Spleen (tissue), 13 donors: ENCODE measurements at regions of chr5 and their contacts with region 1.

Region 1: DNA sequence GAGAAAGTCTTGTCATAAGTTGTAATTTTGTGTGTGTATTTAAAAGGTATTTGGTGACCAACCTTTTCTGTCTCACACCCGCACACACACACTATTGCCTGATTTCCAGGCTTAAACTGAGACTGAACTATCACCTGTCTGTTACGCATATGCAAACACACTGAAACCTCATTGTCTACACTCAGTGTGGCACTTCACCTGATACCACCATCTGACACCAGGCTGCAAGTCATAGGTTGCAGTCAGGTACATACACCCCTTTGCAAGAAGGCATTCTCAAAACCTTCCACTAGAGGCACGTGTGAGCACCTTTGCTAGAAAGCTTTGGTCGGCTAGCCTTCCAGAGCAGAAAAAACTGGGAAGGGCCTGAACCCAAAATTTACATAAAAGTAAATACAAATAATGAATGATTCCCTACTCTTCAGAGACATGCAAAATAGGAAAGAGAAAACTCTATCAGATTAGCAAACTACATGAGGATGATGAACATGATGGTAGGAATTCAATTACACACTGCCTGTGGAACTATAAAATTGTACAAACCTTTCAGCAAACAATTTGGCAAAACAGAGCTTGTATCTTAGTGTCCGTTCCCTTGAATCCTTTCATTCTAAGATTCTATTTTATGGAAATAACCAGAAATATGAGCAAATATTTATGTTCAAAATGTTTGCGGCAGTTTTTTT is 5.9 kb upstream of the FOXD1 start:
- DNase-seq: no peak
- H3K4me3 ChIP-seq: no peak overlapping the region
- H3K27ac ChIP-seq: no peak overlapping the region
- H3K4me1 ChIP-seq: peaks cover 0 to 16% (median 12%) of the 10 kb centered on the region in 6 donors
- H3K27me3 ChIP-seq: peaks cover 18 to 98% (median 70%) of the 10 kb centered on the region in 7 donors
- CTCF ChIP-seq: peak in 10 of 11 experiments; percentile 21 to 77 (median 58)
- POLR2A ChIP-seq: no peak

Region 2: GRCh38 chr5:73088026-73088425 is 366.5 kb before region 1 on chr5:
- intact Hi-C with region 1: loop called (anchors 10 kb)
- DNase-seq: no peak
- H3K4me3 ChIP-seq: no peak overlapping the region
- H3K27ac ChIP-seq: no peak overlapping the region
- H3K4me1 ChIP-seq: no peaks in the 10 kb centered on the region
- H3K27me3 ChIP-seq: no peaks in the 10 kb centered on the region
- CTCF ChIP-seq: no peak
- POLR2A ChIP-seq: no peak

Region 3: DNA sequence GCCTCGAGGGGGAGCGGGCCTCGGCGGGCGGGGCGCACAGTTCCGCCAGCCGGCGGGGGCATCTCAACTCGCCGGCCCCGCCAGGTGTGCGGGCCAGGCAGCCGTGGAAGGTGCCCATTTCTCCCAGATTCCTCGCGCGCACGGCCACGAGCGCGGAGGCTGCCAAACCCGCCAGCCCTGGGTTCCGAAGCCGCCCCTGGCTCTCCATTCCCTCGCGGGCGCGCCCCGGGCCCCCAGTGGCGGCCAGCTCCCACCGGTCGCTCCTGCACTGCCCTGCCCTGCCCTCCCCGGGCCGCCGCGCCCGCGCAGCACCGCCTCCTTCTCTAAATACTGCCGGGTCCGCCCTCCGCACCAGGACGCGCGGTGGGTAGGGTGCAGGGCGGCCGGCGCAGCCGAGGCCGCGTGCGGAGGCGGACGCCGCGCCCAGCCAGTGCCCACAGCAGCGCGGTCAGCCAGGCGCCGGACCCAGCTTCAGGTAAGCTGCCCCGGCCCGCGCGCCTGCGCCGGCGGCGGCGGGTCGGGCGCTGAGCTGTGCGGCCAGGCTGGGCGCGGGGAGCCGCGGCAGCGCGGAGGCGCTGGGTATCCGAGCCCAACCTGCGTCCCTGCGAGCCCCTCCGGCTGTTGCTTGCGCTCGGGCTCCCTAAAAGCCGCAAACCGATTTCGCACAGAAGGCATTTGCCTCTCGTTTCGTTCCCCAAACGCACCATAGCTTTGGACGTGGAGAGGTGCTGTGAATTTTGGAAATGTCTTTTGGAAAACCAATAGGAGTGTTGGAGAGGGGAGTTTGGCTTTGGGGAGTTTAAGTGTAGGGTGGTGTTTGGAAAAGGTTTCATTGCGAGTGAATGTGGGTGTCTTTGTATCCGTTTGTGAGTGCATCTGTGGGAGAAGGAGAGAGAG is 334.0 kb before region 1 on chr5 and contains the start of gene TMEM171:
- intact Hi-C with region 1: no loop called
- DNase-seq: peak; percentile 82
- H3K4me3 ChIP-seq: peak within 1 kb of the TSS; percentile 10 to 70 (median 44)
- H3K27ac ChIP-seq: peak within 1 kb of the TSS; percentile 74 to 92 (median 85)
- H3K4me1 ChIP-seq: peaks cover 2 to 53% (median 18%) of the 10 kb centered on the region in 6 donors
- H3K27me3 ChIP-seq: peaks cover 0 to 88% (median 26%) of the 10 kb centered on the region in 7 donors
- CTCF ChIP-seq: no peak
- POLR2A ChIP-seq: peak in 2 of 3 donors; percentile 14 to 27
- total RNA-seq, gene TMEM171: 11.5 to 38.0 (median 23.3) TPM

Region 4: GRCh38 chr5:73229209-73229661 is 225.3 kb before region 1 on chr5:
- intact Hi-C with region 1: loop called (anchors 10 kb)
- DNase-seq: no peak
- H3K4me3 ChIP-seq: no peak overlapping the region
- H3K27ac ChIP-seq: no peak overlapping the region
- H3K4me1 ChIP-seq: peaks cover 15 to 37% (median 23%) of the 10 kb centered on the region in 6 donors
- H3K27me3 ChIP-seq: peaks cover 9 to 100% (median 69%) of the 10 kb centered on the region in 7 donors
- CTCF ChIP-seq: no peak
- POLR2A ChIP-seq: no peak

Region 5: DNA sequence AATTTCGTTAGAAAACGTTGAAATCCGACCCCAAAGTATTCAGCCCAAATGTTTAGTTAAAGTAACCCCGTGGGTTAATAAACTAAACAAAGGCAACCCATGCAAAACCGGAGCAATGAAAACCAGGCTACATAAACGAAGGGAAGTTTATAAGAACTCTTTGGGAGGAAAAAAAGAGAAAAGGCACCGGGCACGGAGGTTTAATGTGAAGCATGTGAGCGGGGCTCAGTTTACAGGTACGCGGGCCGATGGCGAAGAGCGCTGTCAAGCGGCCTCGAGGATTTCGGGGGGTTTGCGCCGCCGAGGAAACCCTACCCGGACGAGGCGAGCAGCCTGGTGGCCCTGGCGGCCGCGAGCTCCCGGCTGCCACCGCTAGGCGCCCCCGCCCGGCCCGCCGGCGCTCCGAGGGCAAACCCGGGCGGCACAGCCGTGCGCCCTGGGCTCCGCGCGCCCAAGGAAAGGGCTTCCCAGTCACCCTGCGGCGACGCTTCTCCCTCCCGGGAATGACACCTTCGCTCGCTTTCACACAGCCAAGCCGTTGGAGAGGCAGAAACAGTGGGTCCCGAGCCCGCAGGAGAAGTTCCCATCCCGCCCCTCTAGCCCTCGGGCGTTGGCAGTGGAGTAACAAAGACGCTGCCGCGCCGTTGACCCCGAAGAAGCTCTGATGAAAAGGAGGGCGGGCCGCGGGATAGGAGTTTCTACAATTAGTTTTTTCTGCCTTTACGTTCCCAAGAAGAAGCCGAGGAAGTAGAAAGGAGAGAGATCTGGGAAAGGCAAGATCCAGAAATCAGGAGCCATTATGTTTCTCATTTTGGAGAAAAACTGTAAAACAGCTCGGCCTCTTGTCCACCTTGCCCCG is 155.5 kb before region 1 on chr5:
- intact Hi-C with region 1: loop called (anchors 10 kb)
- DNase-seq: no peak
- H3K4me3 ChIP-seq: peak overlapping the region in 2 of 8 donors; percentile 15 to 42
- H3K27ac ChIP-seq: no peak overlapping the region
- H3K4me1 ChIP-seq: peaks cover 13 to 42% (median 28%) of the 10 kb centered on the region in 6 donors
- H3K27me3 ChIP-seq: peaks cover 27 to 100% (median 92%) of the 10 kb centered on the region in 7 donors
- CTCF ChIP-seq: peak in 4 of 11 experiments; percentile 18 to 27 (median 24)
- POLR2A ChIP-seq: no peak